T-cell (primary cell): ENCODE measurements at regions of chr1 and their contacts with region 1.

Region 1: DNA sequence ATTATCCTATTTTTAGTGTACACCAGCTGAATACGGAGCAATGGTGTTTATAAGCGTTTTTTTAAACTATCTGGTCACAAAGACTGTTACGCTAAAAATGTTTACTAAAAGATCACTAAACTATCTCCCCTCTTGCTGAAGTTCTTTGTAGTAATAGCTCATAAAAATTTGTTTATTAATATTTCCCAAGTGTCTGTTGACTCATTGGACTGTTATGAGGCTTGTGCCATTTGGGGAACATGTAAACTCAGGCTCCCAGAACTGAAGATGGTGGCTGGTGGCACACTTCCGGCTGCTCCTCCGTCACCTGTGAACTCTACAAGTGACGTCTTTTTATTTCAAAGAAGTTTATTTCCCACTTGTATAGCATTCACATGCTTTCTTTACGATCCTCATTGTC is 46.3 kb downstream of the AIDA start:
- DNase-seq: no peak
- ATAC-seq: no peak
- H3K4me3 ChIP-seq: no peak overlapping the region
- H3K4me3 Mint-ChIP-seq: no peak overlapping the region
- H3K27ac ChIP-seq: no peak overlapping the region
- H3K27ac Mint-ChIP-seq: no peak overlapping the region
- H3K4me1 ChIP-seq: peaks cover 3 to 4% of the 10 kb centered on the region in 2 experiments
- H3K4me1 Mint-ChIP-seq: peaks cover 14 to 23% (median 21%) of the 10 kb centered on the region in 3 donors
- H3K27me3 ChIP-seq: no peaks in the 10 kb centered on the region
- H3K27me3 Mint-ChIP-seq: no peaks in the 10 kb centered on the region

Region 2: GRCh38 chr1:222224636-222225315 is 441.2 kb before region 1 on chr1:
- CTCF ChIA-PET with region 1: interaction called in 1 of 2 experiments, 10 read pairs
- POLR2A ChIA-PET with region 1: no interaction called
- DNase-seq: no peak
- ATAC-seq: no peak
- H3K4me3 ChIP-seq: no peak overlapping the region
- H3K4me3 Mint-ChIP-seq: no peak overlapping the region
- H3K27ac ChIP-seq: no peak overlapping the region
- H3K27ac Mint-ChIP-seq: no peak overlapping the region
- H3K4me1 ChIP-seq: no peaks in the 10 kb centered on the region
- H3K4me1 Mint-ChIP-seq: no peaks in the 10 kb centered on the region
- H3K27me3 ChIP-seq: no peaks in the 10 kb centered on the region
- H3K27me3 Mint-ChIP-seq: peaks cover 0 to 1% of the 10 kb centered on the region in 2 donors

Region 3: GRCh38 chr1:222631611-222632208 is 34.3 kb before region 1 on chr1:
- CTCF ChIA-PET with region 1: no interaction called
- POLR2A ChIA-PET with region 1: no interaction called
- DNase-seq: no peak
- ATAC-seq: no peak
- H3K4me3 ChIP-seq: no peak overlapping the region
- H3K4me3 Mint-ChIP-seq: no peak overlapping the region
- H3K27ac ChIP-seq: no peak overlapping the region
- H3K27ac Mint-ChIP-seq: peak overlapping the region in 1 of 2 donors; percentile 49
- H3K4me1 ChIP-seq: no peaks in the 10 kb centered on the region
- H3K4me1 Mint-ChIP-seq: peaks cover 6 to 20% (median 8%) of the 10 kb centered on the region in 3 donors
- H3K27me3 ChIP-seq: no peaks in the 10 kb centered on the region
- H3K27me3 Mint-ChIP-seq: no peaks in the 10 kb centered on the region

Region 4: DNA sequence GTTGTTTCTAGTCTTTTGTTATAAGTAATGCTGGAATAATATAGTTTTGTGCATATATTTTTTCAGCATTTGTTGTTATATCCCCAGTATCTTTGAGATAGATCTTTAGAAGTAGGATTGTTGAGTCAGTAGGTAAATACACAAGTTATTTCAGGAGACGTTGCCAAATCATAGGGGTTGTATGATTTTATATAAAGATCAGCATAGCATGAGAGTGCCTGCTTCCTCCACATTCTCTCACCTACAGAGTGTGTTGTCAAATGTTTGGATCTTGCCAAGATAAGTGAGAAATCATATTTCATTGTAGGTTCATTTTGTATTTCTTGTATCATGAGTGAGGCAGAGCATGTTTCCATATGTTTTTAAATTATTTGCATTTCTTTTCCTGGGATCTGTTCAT is 23.5 kb before region 1 on chr1:
- CTCF ChIA-PET with region 1: no interaction called
- POLR2A ChIA-PET with region 1: no interaction called
- DNase-seq: no peak
- ATAC-seq: no peak
- H3K4me3 ChIP-seq: no peak overlapping the region
- H3K4me3 Mint-ChIP-seq: peak overlapping the region in 2 of 3 donors; percentile 58 to 98
- H3K27ac ChIP-seq: no peak overlapping the region
- H3K27ac Mint-ChIP-seq: peak overlapping the region in 1 of 2 donors; percentile 79
- H3K4me1 ChIP-seq: peaks cover 11 to 15% of the 10 kb centered on the region in 2 experiments
- H3K4me1 Mint-ChIP-seq: peaks cover 34 to 36% (median 34%) of the 10 kb centered on the region in 3 donors
- H3K27me3 ChIP-seq: no peaks in the 10 kb centered on the region
- H3K27me3 Mint-ChIP-seq: no peaks in the 10 kb centered on the region

Region 5: DNA sequence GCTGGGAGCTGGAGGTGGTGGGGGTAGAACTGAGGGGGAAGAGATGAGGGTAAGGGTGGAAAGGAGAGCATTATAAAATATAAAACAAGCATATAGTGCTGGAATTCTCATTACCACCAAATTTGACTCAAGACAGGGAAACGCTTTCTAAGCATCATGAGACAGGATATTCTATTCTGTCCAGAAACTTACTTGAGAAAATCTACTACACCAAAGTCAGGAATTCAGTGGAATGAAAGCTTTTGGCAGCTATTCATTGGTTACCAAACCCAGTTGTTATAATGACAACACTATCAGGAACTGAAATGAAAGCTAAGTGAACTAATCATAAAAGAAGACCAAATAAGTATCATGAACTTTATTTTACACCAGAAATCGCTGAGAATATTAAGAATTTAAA is 31.9 kb after region 1 on chr1:
- CTCF ChIA-PET with region 1: no interaction called
- POLR2A ChIA-PET with region 1: interaction called in 1 of 2 experiments, 15 read pairs
- DNase-seq: no peak
- ATAC-seq: no peak
- H3K4me3 ChIP-seq: no peak overlapping the region
- H3K4me3 Mint-ChIP-seq: no peak overlapping the region
- H3K27ac ChIP-seq: no peak overlapping the region
- H3K27ac Mint-ChIP-seq: no peak overlapping the region
- H3K4me1 ChIP-seq: no peaks in the 10 kb centered on the region
- H3K4me1 Mint-ChIP-seq: peaks cover 28 to 38% (median 29%) of the 10 kb centered on the region in 3 donors
- H3K27me3 ChIP-seq: no peaks in the 10 kb centered on the region
- H3K27me3 Mint-ChIP-seq: no peaks in the 10 kb centered on the region